MCF 10A (cell line): ENCODE measurements at regions of chr15 and their contacts with region 1.

Region 1: DNA sequence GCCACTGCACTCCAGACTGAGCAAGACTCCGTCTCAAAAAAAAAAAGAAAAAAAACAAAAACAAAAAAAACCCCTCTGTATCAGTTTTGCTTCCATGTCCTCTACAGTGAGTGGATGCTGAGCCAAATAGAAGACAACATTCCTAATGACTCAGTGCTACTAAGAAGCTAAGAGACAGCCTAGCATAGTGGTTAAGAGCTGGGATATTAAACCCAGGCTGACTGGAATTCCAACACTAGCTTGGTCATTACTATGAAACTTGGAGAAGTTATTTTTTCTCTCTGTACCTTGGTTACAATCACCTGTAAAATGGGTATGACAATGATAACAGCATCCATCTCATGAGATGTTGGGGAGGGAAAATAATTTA is 60.9 kb upstream of the PYGO1 start:
- DNase-seq: no peak
- H3K4me3 Mint-ChIP-seq: no peak overlapping the region
- H3K27ac Mint-ChIP-seq: no peak overlapping the region
- H3K4me1 Mint-ChIP-seq: no peaks in the 10 kb centered on the region
- H3K27me3 Mint-ChIP-seq: no peaks in the 10 kb centered on the region
- CTCF ChIP-seq: no peak

Region 2: GRCh38 chr15:55661428-55661827 is 12.4 kb after region 1 on chr15:
- CTCF ChIA-PET with region 1: interaction called, 11 read pairs
- POLR2A ChIA-PET with region 1: no interaction called
- intact Hi-C with region 1: no loop called
- DNase-seq: no peak
- H3K4me3 Mint-ChIP-seq: no peak overlapping the region
- H3K27ac Mint-ChIP-seq: no peak overlapping the region
- H3K4me1 Mint-ChIP-seq: no peaks in the 10 kb centered on the region
- H3K27me3 Mint-ChIP-seq: no peaks in the 10 kb centered on the region
- CTCF ChIP-seq: no peak

Region 3: DNA sequence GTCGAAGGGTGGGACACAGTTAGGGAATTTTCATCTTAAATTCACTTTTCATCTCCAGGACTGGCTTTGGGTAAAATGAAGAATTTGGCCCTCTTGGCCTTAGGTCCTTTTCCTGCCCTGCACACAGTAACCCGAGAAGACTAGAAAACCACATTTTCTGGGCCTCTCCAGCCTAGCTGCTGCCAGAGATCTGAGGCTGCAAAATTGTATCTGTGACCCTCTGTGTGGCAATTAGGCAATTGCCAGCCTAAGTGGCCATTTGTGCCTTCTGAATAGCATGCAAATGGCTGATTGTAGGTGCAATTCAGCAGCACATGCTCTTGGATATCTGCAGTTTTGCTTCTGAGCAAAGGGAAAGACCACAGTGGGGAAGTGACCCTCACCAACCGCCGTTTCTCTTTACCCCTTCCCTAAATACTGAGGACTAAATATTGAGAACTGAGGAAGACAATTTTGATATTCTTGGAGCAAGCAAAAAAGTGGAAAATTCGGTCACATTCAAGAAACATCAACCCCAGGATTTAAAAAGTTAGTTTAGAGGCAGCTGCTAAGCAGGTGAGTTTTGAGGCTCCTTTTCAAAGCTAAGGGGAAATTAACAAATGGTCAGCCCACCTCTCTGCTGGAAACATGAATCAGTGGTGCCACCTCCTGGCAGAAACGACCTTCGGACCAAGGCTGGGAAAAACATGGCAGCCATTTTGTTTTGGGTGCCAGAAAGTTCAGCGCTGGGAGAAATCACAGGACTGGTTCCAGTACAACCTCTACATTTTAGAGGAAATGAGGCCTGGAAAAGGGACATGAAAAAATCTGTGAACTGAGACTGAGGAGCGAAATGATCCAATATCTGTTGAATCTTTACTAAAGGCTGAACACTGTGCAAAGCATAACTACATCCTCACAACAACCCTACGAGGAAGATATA is 150.5 kb after region 1 on chr15:
- CTCF ChIA-PET with region 1: interaction called, 79 read pairs
- POLR2A ChIA-PET with region 1: interaction called, 3 read pairs
- intact Hi-C with region 1: loop called (anchors 1 kb)
- DNase-seq: peak; percentile 71
- H3K4me3 Mint-ChIP-seq: no peak overlapping the region
- H3K27ac Mint-ChIP-seq: no peak overlapping the region
- H3K4me1 Mint-ChIP-seq: peaks cover 13% of the 10 kb centered on the region
- H3K27me3 Mint-ChIP-seq: no peaks in the 10 kb centered on the region
- CTCF ChIP-seq: peak; percentile 65

Region 4: DNA sequence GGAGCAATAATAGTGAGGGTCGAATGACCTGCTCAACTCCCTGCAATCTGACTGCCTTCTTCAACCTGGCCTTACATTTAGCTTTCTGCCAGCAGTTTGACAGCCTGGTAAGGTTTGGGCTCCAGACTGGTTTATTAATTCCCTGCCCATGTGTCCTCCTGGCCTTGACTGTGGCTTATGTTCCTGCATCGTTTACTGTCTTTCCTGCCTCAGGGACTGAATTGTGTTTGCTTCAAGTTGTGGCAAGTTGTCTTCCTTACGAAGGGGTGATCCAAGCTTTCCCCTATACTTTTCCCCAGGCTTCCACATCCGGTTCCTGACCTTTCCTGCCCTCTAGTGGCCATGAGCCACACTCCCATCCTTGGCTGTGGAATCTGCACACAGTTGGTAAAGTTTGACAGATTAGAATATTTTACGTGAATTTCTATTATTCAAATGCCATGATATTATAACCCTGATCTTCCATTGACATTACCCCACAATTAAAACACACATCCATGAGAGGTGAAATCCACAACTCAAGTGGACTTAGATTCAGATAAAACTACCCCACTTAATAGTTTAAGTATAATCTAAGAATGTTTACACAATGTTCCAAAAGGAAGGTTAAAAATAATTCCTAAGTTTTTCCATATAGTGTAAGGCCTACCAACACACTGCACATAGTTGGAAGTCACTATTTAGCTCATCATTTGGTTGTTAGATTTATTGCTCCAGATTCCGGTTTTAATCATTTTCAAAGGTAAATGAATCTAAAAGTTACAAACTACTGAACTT is 248.7 kb after region 1 on chr15:
- CTCF ChIA-PET with region 1: interaction called, 3 read pairs
- POLR2A ChIA-PET with region 1: no interaction called
- intact Hi-C with region 1: loop called (anchors 5 kb)
- DNase-seq: peak; percentile 87
- H3K4me3 Mint-ChIP-seq: peak overlapping the region; percentile 45
- H3K27ac Mint-ChIP-seq: peak overlapping the region; percentile 92
- H3K4me1 Mint-ChIP-seq: peaks cover 21% of the 10 kb centered on the region
- H3K27me3 Mint-ChIP-seq: no peaks in the 10 kb centered on the region
- CTCF ChIP-seq: peak; percentile 73

Region 5: DNA sequence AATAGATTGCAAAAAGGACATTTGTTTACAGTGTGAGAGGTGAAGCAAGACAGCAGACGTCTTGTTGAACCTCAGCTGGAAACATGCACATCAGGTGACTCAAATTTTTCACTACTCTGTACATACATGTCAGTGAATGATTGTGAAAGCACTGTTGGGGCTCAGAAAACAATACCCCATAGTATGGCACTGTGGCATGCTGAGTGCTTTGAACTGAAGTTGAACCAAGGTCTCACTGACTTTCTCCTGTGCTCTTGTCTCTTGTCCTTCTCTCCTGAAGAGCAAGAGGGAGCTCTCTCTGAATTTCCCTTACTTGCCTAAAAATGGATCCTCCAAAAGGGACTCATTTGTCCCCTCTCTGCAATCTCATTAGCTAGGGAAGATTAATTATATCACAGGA is 368.9 kb after region 1 on chr15:
- CTCF ChIA-PET with region 1: no interaction called
- POLR2A ChIA-PET with region 1: no interaction called
- intact Hi-C with region 1: no loop called
- DNase-seq: no peak
- H3K4me3 Mint-ChIP-seq: no peak overlapping the region
- H3K27ac Mint-ChIP-seq: peak overlapping the region; percentile 3
- H3K4me1 Mint-ChIP-seq: peaks cover 18% of the 10 kb centered on the region
- H3K27me3 Mint-ChIP-seq: no peaks in the 10 kb centered on the region
- CTCF ChIP-seq: no peak

Region 6: DNA sequence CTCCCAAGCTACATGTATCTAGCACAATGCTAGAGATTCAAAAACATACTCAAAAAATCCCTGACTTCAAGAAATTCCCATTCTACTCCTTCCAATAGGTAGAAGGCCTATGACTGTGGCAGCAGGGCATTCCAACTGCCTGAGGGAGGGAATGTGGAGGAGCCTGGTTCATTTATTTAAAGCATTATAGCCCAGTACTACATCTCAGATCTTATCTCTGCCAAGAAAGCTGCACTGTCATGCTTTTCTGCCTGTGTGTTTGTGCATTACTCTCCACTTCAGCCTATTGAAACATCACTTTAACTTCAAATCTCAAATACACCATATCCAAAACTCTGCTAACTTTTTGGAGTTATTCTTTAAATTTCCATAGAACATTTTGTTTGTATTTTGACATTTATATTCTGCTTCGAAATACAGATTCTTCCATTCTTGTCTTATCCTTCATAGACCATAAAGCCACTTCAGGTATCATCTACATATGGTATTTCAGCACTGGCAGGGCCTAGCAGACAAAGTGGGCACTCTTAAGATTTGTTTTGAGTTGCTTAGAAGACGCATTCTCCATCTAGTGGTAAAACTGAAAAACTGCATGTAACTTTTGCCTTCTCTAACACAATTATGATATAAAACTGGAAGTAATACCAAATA is 403.5 kb after region 1 on chr15:
- CTCF ChIA-PET with region 1: interaction called, 3 read pairs
- POLR2A ChIA-PET with region 1: no interaction called
- intact Hi-C with region 1: loop called (anchors 1 kb)
- DNase-seq: peak; percentile 58
- H3K4me3 Mint-ChIP-seq: no peak overlapping the region
- H3K27ac Mint-ChIP-seq: no peak overlapping the region
- H3K4me1 Mint-ChIP-seq: peaks cover 15% of the 10 kb centered on the region
- H3K27me3 Mint-ChIP-seq: no peaks in the 10 kb centered on the region
- CTCF ChIP-seq: peak; percentile 51

Region 7: GRCh38 chr15:56428821-56429458 is 779.9 kb after region 1 on chr15:
- CTCF ChIA-PET with region 1: no interaction called
- POLR2A ChIA-PET with region 1: no interaction called
- intact Hi-C with region 1: loop called (anchors 2 kb)
- DNase-seq: peak; percentile 51
- H3K4me3 Mint-ChIP-seq: no peak overlapping the region
- H3K27ac Mint-ChIP-seq: peak overlapping the region; percentile 28
- H3K4me1 Mint-ChIP-seq: no peaks in the 10 kb centered on the region
- H3K27me3 Mint-ChIP-seq: no peaks in the 10 kb centered on the region
- CTCF ChIP-seq: peak; percentile 44